Activated B cell treated with CpG ODN at 0.5 μM for 24 hours (primary cell): ENCODE measurements at regions of chr9 and their contacts with region 1.

Region 1: GRCh38 chr9:13088720-13089427 is 190.6 kb downstream of the MPDZ start:
- DNase-seq: no peak
- ATAC-seq: no peak
- H3K4me3 Mint-ChIP-seq: no peak overlapping the region
- H3K27ac Mint-ChIP-seq: no peak overlapping the region
- H3K4me1 Mint-ChIP-seq: no peaks in the 10 kb centered on the region
- H3K27me3 Mint-ChIP-seq: no peaks in the 10 kb centered on the region
- CTCF ChIP-seq: no peak

Region 2: DNA sequence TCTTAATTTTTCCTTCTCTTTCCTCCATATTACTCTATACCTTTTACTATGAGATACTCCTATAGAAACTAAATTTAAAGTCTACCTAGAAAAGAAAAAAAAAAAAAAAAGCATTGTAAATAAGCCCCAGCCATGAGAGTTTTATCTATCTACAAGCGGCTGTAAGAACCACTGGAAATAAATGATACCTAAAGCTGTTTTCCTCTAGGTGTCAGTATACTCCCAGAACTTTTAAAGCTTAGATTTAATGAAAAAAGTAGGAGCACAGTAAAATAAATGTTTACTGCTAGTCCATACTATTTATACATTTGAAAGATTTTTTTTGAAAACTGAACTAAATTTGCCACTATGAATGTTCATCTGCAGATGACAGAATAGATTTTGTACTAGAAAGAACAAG is 369.4 kb before region 1 on chr9:
- CTCF ChIA-PET with region 1: no interaction called
- POLR2A ChIA-PET with region 1: no interaction called
- intact Hi-C with region 1: loop called (anchors 5 kb)
- DNase-seq: no peak
- ATAC-seq: no peak
- H3K4me3 Mint-ChIP-seq: no peak overlapping the region
- H3K27ac Mint-ChIP-seq: no peak overlapping the region
- H3K4me1 Mint-ChIP-seq: no peaks in the 10 kb centered on the region
- H3K27me3 Mint-ChIP-seq: no peaks in the 10 kb centered on the region
- CTCF ChIP-seq: no peak

Region 3: DNA sequence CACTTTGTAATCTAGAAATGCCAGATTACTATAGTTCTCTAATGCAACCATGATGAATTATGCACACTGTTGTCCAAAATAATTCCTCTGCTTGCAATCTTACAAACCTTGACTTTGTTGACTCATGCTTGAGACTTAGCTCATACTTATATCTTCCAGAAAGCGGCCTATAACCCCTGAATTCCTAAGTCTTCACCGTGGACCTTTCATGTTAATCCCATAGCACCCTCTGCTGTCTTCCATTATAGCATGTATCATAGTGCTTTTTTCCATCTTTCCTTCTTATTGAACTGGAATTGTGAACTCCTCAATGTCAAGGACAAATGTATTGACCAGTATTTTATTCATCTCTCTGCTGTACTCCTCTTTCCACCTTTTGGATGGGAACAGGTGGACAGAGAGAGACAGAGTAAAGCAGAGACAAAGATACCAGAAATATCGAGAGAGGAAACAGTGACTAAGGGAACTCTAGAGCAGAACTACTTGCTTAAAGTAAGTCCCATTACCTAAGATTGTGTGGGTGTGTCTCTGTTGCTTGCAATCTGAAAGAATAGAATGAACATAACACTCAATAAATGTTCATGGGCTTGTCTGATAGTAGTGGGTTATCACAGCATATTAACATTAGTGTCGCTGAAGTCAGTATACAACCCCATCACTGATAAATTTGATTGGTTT is 204.0 kb before region 1 on chr9:
- CTCF ChIA-PET with region 1: no interaction called
- POLR2A ChIA-PET with region 1: no interaction called
- intact Hi-C with region 1: no loop called
- DNase-seq: no peak
- ATAC-seq: no peak
- H3K4me3 Mint-ChIP-seq: no peak overlapping the region
- H3K27ac Mint-ChIP-seq: no peak overlapping the region
- H3K4me1 Mint-ChIP-seq: no peaks in the 10 kb centered on the region
- H3K27me3 Mint-ChIP-seq: no peaks in the 10 kb centered on the region
- CTCF ChIP-seq: no peak